Naive thymus-derived CD4-positive, alpha-beta T cell (primary cell): ENCODE measurements at regions of chr4 and their contacts with region 1.

Region 1: DNA sequence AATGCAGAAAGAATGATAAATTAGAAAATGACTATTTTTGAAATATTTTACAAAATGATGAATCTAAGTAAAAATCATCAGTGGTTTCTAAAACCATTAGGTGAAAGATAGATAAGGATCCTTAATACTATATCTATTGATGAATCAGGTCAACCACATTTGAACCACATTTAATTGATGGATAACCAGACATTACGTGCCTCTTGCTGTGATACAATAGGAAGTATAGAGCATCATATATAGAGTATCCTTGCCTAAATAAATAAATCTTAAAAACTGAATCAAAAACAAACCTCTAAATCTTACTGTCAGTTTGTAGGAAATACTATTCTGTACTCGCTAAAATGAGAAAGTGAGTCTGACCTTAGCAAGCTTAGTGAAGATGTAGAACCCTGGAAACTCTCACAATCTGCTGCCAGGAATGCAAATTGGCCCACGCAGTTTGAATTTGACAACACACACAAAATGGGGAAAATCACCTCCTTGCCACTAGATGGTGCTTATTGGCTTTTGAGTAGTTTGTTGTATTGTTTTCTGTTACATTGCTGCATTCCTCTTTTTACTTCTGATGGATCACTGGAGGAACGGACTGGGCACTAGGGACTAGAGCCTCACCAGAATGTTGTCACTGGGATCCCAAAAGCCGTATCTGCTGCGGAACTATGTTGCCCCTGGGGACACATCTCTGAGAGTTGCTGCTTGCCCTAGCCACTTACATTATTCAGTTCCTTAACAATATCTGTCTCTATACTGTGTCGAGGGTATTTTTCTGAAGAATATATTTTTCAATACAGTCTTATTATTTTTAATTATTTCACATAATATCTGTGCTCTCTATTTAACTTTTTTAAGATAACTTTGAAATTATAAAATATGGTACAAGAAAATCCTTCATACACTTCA is 25.4 kb upstream of the SLAIN2 start:
- DNase-seq: peak in 7 of 9 donors; percentile 13 to 53 (median 33)
- ATAC-seq: peak; percentile 61
- H3K4me3 ChIP-seq: no peak overlapping the region
- H3K4me3 Mint-ChIP-seq: no peak overlapping the region
- H3K27ac ChIP-seq: no peak overlapping the region
- H3K27ac Mint-ChIP-seq: peak overlapping the region in 1 of 9 donors; percentile 46
- H3K4me1 ChIP-seq: no peaks in the 10 kb centered on the region
- H3K4me1 Mint-ChIP-seq: peaks cover 0 to 5% (median 0%) of the 10 kb centered on the region in 7 donors
- H3K27me3 ChIP-seq: no peaks in the 10 kb centered on the region
- H3K27me3 Mint-ChIP-seq: peaks cover 0 to 6% (median 0%) of the 10 kb centered on the region in 5 donors

Region 2: GRCh38 chr4:48329976-48330375 is 14.0 kb after region 1 on chr4:
- CTCF ChIA-PET with region 1: no interaction called
- POLR2A ChIA-PET with region 1: no interaction called
- intact Hi-C with region 1: no loop called
- DNase-seq: no peak
- ATAC-seq: no peak
- H3K4me3 ChIP-seq: no peak overlapping the region
- H3K4me3 Mint-ChIP-seq: no peak overlapping the region
- H3K27ac ChIP-seq: no peak overlapping the region
- H3K27ac Mint-ChIP-seq: no peak overlapping the region
- H3K4me1 ChIP-seq: no peaks in the 10 kb centered on the region
- H3K4me1 Mint-ChIP-seq: peaks cover 0 to 2% (median 0%) of the 10 kb centered on the region in 7 donors
- H3K27me3 ChIP-seq: no peaks in the 10 kb centered on the region
- H3K27me3 Mint-ChIP-seq: peaks cover 0 to 4% (median 0%) of the 10 kb centered on the region in 5 donors

Region 3: DNA sequence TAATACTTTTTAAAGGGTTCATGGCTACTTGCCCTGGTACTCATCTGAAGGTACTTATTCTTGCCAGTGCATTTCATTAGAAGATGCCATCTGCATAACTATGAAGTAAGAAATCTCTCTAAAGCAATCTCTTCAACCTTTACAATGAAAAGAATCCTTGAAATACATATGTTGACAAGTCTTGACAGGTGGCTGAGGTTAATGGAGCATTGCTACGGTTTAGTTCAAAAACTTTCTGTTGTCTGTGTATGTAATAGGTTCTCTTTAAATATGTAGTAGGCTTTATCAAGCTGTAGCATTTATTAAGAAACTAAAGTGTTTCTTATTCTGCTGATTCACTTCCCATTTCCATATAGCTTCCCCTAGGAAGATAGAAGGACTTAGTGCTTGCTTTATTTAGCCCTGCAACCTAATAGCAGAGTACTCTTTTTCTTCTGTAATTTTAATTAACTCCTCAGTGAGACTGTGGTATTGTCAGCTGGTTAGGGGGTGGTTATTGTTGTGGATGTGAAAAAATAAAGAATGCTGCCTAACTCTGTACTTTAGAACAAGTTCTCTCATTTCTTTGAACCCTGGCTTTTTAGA is 64.7 kb after region 1 on chr4:
- CTCF ChIA-PET with region 1: no interaction called
- POLR2A ChIA-PET with region 1: no interaction called
- intact Hi-C with region 1: loop called in 1 of 2 experiments (anchors 5 kb)
- DNase-seq: no peak
- ATAC-seq: no peak
- H3K4me3 ChIP-seq: no peak overlapping the region
- H3K4me3 Mint-ChIP-seq: no peak overlapping the region
- H3K27ac ChIP-seq: no peak overlapping the region
- H3K27ac Mint-ChIP-seq: peak overlapping the region in 1 of 9 donors; percentile 38
- H3K4me1 ChIP-seq: peaks cover 0 to 4% of the 10 kb centered on the region in 2 donors
- H3K4me1 Mint-ChIP-seq: peaks cover 2 to 20% (median 11%) of the 10 kb centered on the region in 7 donors
- H3K27me3 ChIP-seq: no peaks in the 10 kb centered on the region
- H3K27me3 Mint-ChIP-seq: no peaks in the 10 kb centered on the region

Region 4: GRCh38 chr4:48499551-48500066 is 183.6 kb after region 1 on chr4:
- CTCF ChIA-PET with region 1: no interaction called
- POLR2A ChIA-PET with region 1: no interaction called
- intact Hi-C with region 1: loop called in 1 of 2 experiments (anchors 5 kb)
- DNase-seq: no peak
- ATAC-seq: no peak
- H3K4me3 ChIP-seq: no peak overlapping the region
- H3K4me3 Mint-ChIP-seq: no peak overlapping the region
- H3K27ac ChIP-seq: no peak overlapping the region
- H3K27ac Mint-ChIP-seq: peak overlapping the region in 1 of 9 donors; percentile 25
- H3K4me1 ChIP-seq: no peaks in the 10 kb centered on the region
- H3K4me1 Mint-ChIP-seq: peaks cover 0 to 14% (median 0%) of the 10 kb centered on the region in 7 donors
- H3K27me3 ChIP-seq: no peaks in the 10 kb centered on the region
- H3K27me3 Mint-ChIP-seq: no peaks in the 10 kb centered on the region

Region 5: GRCh38 chr4:48546336-48546735 is 230.4 kb after region 1 on chr4:
- CTCF ChIA-PET with region 1: no interaction called
- POLR2A ChIA-PET with region 1: no interaction called
- intact Hi-C with region 1: loop called in 1 of 2 experiments (anchors 1 kb)
- DNase-seq: peak in 5 of 9 donors; percentile 4 to 31 (median 20)
- ATAC-seq: peak; percentile 44
- H3K4me3 ChIP-seq: no peak overlapping the region
- H3K4me3 Mint-ChIP-seq: no peak overlapping the region
- H3K27ac ChIP-seq: no peak overlapping the region
- H3K27ac Mint-ChIP-seq: peak overlapping the region in 2 of 9 donors; percentile 49 to 56
- H3K4me1 ChIP-seq: no peaks in the 10 kb centered on the region
- H3K4me1 Mint-ChIP-seq: peaks cover 0 to 2% (median 0%) of the 10 kb centered on the region in 7 donors
- H3K27me3 ChIP-seq: no peaks in the 10 kb centered on the region
- H3K27me3 Mint-ChIP-seq: no peaks in the 10 kb centered on the region